Heart left ventricle (tissue), 16 donors: ENCODE measurements at regions of chr7 and their contacts with region 1.

Region 1: GRCh38 chr7:116354546-116355408 is 144.4 kb downstream of the TES start:
- DNase-seq: peak; percentile 81 to 83 (median 83)
- ATAC-seq: peak; percentile 78 to 89 (median 82)
- H3K4me3 ChIP-seq: peak overlapping the region in 9 of 12 donors; percentile 4 to 40 (median 28)
- H3K27ac ChIP-seq: peak overlapping the region; percentile 78 to 95 (median 86)
- H3K4me1 ChIP-seq: peaks cover 3 to 68% (median 54%) of the 10 kb centered on the region in 12 donors
- H3K27me3 ChIP-seq: no peaks in the 10 kb centered on the region
- CTCF ChIP-seq: peak in 1 of 12 donors; percentile 1
- POLR2A ChIP-seq: peak in 1 of 2 donors; percentile 18

Region 2: DNA sequence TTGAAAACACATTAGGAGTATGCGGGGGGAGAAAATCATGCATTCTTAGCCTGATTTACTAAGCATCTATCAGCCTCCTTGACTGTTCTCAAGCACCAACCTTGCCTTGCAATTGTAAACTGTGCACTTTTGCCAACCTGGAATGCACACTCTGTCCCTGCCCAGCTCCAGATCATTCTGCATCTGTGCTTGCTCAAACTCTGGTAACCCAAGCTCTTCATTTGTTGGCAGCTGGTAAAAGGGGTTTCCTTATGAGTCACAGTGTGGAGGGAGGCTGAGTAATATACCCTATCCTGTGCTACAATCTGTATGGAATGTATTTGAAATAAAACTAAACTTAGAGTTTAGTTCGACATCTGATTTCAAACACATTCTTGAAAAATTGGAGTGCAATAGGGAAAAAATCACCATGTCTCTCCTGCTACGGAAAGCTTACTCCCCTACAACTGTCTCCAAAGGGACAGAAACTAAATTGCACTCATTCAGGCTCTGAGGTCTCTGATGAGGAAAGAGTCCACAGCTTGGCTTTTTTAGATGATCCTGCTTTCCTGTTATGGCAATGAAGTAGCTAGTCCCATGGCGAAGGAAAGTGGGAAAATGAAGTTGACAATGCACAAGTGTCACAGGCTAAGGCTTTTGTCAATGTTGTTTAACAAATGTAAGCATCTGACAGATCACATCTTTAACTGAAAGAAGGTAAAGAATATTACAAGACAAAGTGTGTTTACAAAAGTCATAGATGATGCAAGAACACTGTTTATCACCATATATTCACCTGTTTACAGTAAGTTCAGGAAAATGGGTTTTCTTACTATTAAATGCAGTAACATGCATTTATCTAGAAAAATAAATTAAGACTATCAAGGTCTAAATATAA is 82.6 kb before region 1 on chr7:
- intact Hi-C with region 1: loop called in 3 of 10 experiments (anchors 5 to 10 kb)
- DNase-seq: peak in 4 of 5 donors; percentile 36 to 66 (median 41)
- ATAC-seq: peak; percentile 93 to 98 (median 96)
- H3K4me3 ChIP-seq: no peak overlapping the region
- H3K27ac ChIP-seq: peak overlapping the region in 11 of 12 donors; percentile 32 to 76 (median 51)
- H3K4me1 ChIP-seq: peaks cover 0 to 30% (median 18%) of the 10 kb centered on the region in 12 donors
- H3K27me3 ChIP-seq: no peaks in the 10 kb centered on the region
- CTCF ChIP-seq: no peak
- POLR2A ChIP-seq: no peak

Region 3: GRCh38 chr7:116395125-116395791 is 40.5 kb after region 1 on chr7:
- intact Hi-C with region 1: loop called in 5 of 10 experiments (anchors 2 to 5 kb)
- DNase-seq: peak in 1 of 5 donors; percentile 21
- ATAC-seq: peak in 3 of 4 donors; percentile 25 to 60 (median 38)
- H3K4me3 ChIP-seq: no peak overlapping the region
- H3K27ac ChIP-seq: peak overlapping the region in 7 of 12 donors; percentile 2 to 47 (median 18)
- H3K4me1 ChIP-seq: peaks cover 0 to 50% (median 31%) of the 10 kb centered on the region in 12 donors
- H3K27me3 ChIP-seq: no peaks in the 10 kb centered on the region
- CTCF ChIP-seq: no peak
- POLR2A ChIP-seq: no peak

Region 4: GRCh38 chr7:116451958-116452729 is 97.4 kb after region 1 on chr7:
- intact Hi-C with region 1: loop called in 4 of 10 experiments (anchors 5 to 10 kb)
- DNase-seq: no peak
- ATAC-seq: no peak
- H3K4me3 ChIP-seq: no peak overlapping the region
- H3K27ac ChIP-seq: peak overlapping the region in 1 of 12 donors; percentile 30
- H3K4me1 ChIP-seq: peaks cover 0 to 29% (median 11%) of the 10 kb centered on the region in 12 donors
- H3K27me3 ChIP-seq: no peaks in the 10 kb centered on the region
- CTCF ChIP-seq: peak in 4 of 12 donors; percentile 10 to 33 (median 14)
- POLR2A ChIP-seq: no peak

Region 5: GRCh38 chr7:116511552-116512519 is 157.1 kb after region 1 on chr7:
- intact Hi-C with region 1: loop called in 2 of 10 experiments (anchors 5 kb)
- DNase-seq: peak in 4 of 5 donors; percentile 50 to 62 (median 54)
- ATAC-seq: peak; percentile 82 to 91 (median 91)
- H3K4me3 ChIP-seq: peak overlapping the region; percentile 6 to 62 (median 47)
- H3K27ac ChIP-seq: peak overlapping the region; percentile 70 to 90 (median 84)
- H3K4me1 ChIP-seq: peaks cover 0 to 59% (median 21%) of the 10 kb centered on the region in 12 donors
- H3K27me3 ChIP-seq: no peaks in the 10 kb centered on the region
- CTCF ChIP-seq: no peak
- POLR2A ChIP-seq: no peak

Region 6: DNA sequence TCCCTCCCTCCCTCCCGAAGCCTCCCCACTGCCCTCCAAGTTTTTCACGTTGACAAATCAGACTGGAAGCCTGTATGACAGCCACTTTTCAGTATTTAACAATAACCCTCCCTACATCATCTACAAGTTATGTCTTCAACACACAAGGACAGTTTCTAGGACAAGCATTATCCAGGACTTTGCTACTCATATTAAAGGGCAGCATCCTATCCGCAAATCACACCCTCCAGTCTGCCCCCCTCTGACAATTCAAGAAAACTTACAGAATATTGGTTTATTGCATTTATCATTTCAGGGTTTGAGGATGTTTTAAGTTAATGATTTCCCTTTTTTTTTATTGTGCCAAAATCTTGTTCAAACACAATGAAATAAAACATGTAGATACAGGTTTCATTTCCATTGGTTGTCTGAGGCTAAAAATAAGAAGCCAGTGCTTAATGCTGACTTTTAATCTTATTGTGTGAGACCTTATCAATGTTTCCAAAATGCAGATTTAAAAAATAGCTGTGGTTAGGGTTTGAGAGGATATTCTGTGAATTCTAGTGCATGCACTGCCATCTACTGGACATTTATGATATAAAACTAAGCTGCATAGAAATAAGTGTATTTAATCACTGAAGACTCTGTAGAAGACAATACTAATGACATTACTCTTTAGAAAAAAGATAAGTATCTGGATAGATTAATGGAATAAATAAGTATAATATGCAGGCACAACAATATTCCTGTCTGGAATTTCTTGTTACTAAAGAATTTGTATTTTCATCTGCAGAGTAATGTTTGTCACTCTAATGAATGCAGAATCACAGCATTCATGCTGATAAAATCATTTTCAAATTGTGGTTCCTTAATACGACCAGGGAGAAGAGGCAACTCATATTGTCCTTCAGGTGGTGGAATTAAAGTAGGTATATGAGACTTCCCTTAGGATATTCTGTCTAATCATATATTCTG is 234.1 kb after region 1 on chr7:
- intact Hi-C with region 1: loop called in 5 of 10 experiments (anchors 10 kb)
- DNase-seq: no peak
- ATAC-seq: peak; percentile 29 to 58 (median 50)
- H3K4me3 ChIP-seq: no peak overlapping the region
- H3K27ac ChIP-seq: peak overlapping the region in 9 of 12 donors; percentile 10 to 57 (median 35)
- H3K4me1 ChIP-seq: peaks cover 0 to 43% (median 31%) of the 10 kb centered on the region in 12 donors
- H3K27me3 ChIP-seq: peaks cover 0 to 5% (median 0%) of the 10 kb centered on the region in 9 donors
- CTCF ChIP-seq: peak; percentile 58 to 88 (median 75)
- POLR2A ChIP-seq: no peak